K562 (cell line): ENCODE measurements at regions of chr7 and their contacts with region 1.

Region 1: DNA sequence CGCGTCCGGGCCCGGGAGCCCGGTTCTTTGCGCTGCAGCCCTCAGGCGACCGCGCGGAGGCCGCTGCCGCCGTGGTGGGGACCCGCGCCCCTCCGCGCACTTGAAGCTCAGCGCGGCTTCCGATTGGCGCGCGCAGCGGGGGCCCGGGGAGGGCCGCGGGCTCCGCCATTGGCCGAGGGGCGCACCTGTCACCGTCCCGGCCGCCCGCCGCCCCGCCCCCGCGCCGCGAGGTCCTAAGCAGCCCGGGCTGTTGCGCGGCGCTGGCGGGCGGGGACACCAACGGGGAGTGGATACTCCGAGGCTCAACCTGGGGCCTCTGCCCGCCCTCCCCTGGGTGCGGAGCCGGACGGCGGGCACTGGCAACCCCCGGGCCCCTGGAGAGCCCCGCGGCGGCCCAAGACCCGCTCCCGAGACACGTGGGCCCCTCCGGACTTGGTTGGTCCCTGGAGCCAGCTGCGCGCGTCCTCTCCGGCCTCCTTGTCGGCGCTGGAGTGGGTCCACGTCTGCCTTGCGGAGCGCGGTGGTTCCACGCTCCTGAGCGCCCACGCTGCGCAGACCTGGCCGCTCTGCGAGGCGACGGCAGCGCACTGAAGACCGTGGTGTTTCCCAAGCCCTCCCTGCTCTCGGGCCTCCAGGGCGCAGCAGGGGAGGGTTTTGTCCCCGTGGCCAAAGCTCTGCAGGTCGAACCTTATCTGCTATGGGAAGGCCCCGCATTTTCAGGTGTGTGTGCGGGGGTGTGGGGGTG is at the start of gene MNX1:
- DNase-seq: peak; percentile 96 to 100 (median 100)
- ATAC-seq: peak; percentile 98
- H3K4me3 ChIP-seq: peak within 1 kb of the TSS; percentile 79
- H3K27ac ChIP-seq: no peak within 1 kb of the TSS; the same call in 2 of the 3 replicates
- H3K4me1 ChIP-seq: peaks cover 4 to 39% of the 10 kb centered on the region in 2 experiments
- H3K27me3 ChIP-seq: peaks cover 14 to 53% of the 10 kb centered on the region in 2 experiments; a peak in 4 of 5 replicates
- CTCF ChIP-seq: no peak
- EP300 ChIP-seq: no peak
- POLR2A ChIP-seq: peak; percentile 53
- RAD21 ChIP-seq: no peak
- polyA plus RNA-seq, gene MNX1: 0.15 to 0.25 TPM

Region 2: GRCh38 chr7:156309016-156309620 is 701.6 kb before region 1 on chr7:
- CTCF ChIA-PET with region 1: no interaction called
- POLR2A ChIA-PET with region 1: no interaction called
- in situ Hi-C with region 1: no loop called
- intact Hi-C with region 1: no loop called
- DNase-seq: no peak
- ATAC-seq: no peak
- H3K4me3 ChIP-seq: no peak overlapping the region
- H3K27ac ChIP-seq: no peak overlapping the region
- H3K4me1 ChIP-seq: no peaks in the 10 kb centered on the region
- H3K27me3 ChIP-seq: peaks cover 24 to 42% of the 10 kb centered on the region in 2 experiments
- CTCF ChIP-seq: no peak
- EP300 ChIP-seq: no peak
- POLR2A ChIP-seq: no peak
- RAD21 ChIP-seq: no peak

Region 3: DNA sequence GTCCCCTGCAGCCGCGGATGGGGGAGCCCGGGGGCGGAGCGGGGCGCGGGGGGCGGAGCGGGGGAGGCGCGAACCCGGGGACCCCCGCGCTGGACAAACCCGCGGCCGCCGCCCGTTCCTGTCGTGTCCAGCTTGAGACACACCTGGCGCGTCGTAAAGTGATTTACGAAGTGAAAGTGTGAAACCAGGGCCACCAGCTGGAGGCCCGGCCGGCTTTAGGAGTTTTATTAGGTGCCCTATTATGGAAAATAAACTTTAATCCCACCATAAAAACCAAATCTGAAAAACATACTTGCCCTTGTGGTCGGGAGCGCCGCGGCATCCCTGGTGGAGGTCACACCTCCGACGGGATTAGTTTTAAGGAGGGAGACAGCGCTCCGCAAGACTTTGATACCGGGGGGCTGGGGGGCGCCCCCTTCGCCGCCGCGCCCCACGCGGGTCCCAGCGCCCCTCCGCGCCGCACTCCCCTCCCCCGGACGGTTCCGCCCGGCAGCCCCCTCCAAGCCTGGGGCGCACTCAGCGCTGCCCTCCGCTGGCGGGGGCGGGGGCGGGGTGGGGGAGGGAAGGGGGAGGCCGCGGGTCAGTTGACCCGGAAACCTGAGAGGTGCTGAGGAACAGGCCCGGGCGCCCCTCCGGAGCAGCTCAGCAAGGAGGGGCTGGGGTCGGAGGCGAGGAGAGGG is 10.6 kb before region 1 on chr7:
- CTCF ChIA-PET with region 1: no interaction called
- POLR2A ChIA-PET with region 1: interaction called, 10 read pairs
- in situ Hi-C with region 1: no loop called
- intact Hi-C with region 1: no loop called
- DNase-seq: peak in 3 of 4 experiments; percentile 63 to 76 (median 74)
- ATAC-seq: peak; percentile 75
- H3K4me3 ChIP-seq: peak overlapping the region; percentile 42
- H3K27ac ChIP-seq: no peak overlapping the region; the same call in 2 of the 3 replicates
- H3K4me1 ChIP-seq: peaks cover 16 to 32% of the 10 kb centered on the region in 2 experiments
- H3K27me3 ChIP-seq: peaks cover 0 to 4% of the 10 kb centered on the region in 2 experiments; a peak in 1 of 5 replicates
- CTCF ChIP-seq: no peak
- EP300 ChIP-seq: no peak
- POLR2A ChIP-seq: no peak
- RAD21 ChIP-seq: no peak

Region 4: DNA sequence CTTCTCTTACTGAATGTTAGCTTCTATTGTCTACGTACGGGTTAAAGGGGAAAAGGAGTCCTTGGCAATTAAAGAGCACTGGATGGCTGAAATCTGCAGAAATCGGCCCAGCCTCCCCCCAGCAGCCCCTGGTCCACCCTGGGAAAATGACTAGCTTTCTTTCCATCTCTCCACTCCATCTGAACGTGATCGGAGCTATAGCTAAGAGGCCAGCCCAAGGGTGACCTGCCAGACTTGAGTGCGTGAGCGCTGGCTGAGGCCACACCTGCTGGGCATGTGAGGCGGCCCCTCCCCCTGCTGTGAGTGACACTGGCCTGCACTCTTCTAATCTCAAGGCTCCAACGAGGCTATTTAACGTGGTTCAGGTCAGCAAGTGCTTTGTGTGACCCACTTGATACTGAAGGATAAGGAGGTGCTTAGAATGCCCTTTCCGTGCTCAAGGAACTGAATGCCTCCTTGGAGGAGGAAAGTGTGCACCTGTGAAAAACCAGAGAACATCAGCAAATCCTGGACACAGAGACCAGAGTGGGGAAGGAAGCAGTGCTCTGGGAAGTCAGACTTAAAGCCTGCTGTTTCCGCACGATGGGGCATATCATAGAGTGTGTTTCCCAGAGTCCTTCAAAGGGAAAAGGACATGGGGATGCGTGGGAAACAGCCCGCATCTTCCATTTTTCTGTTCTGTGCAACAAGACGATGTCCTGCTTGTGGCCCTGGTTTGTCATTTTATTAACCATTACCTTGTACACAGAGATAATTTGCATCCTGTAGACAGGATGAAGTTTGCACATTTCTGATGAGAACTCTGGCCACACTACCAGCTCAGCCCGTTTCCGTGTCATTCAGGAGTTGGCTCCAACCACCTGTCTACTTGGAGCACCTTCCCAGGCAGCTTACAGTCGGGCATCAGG is 12.2 kb after region 1 on chr7:
- CTCF ChIA-PET with region 1: no interaction called
- POLR2A ChIA-PET with region 1: interaction called, 11 read pairs
- in situ Hi-C with region 1: no loop called
- intact Hi-C with region 1: no loop called
- DNase-seq: peak in 1 of 4 experiments; percentile 46
- ATAC-seq: peak; percentile 78
- H3K4me3 ChIP-seq: no peak overlapping the region
- H3K27ac ChIP-seq: no peak overlapping the region
- H3K4me1 ChIP-seq: peaks cover 0 to 32% of the 10 kb centered on the region in 2 experiments; a peak in 3 of 5 replicates
- H3K27me3 ChIP-seq: peaks cover 70 to 80% of the 10 kb centered on the region in 2 experiments
- CTCF ChIP-seq: no peak
- EP300 ChIP-seq: no peak
- POLR2A ChIP-seq: no peak
- RAD21 ChIP-seq: no peak